ENCODE measurements at regions of chr20 and their contacts with region 1.

Region 1: DNA sequence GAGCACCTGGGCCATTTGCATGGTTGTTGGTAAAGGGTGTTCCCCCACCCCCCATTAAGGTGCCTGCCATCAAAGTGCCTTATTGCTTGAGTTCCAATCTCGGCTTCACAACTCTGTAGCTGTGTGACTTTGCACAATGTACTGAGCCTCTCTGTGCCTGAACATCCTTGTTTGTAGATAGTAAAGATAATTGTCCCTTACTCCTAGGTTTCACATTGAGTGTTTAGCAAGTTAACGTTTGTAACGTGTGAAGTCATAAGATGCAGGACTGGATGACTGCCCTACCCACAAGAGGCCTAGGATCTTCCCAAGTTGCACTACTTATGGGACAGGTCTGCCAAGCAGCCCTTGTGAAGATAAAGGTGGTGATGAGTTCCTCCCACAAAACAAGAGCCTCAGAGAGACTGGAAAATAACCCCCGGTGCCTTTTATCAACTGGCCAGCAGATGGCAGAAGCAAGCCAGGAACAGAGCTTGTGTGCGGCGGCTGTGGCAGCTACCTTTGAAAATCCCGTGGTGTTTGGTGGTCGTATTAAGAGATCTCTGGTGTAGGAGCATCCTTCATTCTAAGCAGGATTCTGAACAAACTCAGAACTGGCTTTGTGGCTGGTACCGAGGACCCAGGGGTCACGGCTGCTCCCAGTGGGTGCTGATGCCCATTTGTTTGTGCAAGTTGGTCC is 99.0 kb downstream of the CDH26 start:
- DNase-seq: peak; percentile 86
- H3K4me3 ChIP-seq: peak overlapping the region in 1 of 8 donors; percentile 66
- H3K27ac ChIP-seq: peak overlapping the region in 6 of 8 donors; percentile 82 to 96 (median 88)
- H3K4me1 ChIP-seq: peaks cover 13 to 78% (median 48%) of the 10 kb centered on the region in 6 donors
- H3K27me3 ChIP-seq: peaks cover 0 to 25% (median 0%) of the 10 kb centered on the region in 7 donors
- CTCF ChIP-seq: peak; percentile 66 to 93 (median 85)
- POLR2A ChIP-seq: no peak

Region 2: DNA sequence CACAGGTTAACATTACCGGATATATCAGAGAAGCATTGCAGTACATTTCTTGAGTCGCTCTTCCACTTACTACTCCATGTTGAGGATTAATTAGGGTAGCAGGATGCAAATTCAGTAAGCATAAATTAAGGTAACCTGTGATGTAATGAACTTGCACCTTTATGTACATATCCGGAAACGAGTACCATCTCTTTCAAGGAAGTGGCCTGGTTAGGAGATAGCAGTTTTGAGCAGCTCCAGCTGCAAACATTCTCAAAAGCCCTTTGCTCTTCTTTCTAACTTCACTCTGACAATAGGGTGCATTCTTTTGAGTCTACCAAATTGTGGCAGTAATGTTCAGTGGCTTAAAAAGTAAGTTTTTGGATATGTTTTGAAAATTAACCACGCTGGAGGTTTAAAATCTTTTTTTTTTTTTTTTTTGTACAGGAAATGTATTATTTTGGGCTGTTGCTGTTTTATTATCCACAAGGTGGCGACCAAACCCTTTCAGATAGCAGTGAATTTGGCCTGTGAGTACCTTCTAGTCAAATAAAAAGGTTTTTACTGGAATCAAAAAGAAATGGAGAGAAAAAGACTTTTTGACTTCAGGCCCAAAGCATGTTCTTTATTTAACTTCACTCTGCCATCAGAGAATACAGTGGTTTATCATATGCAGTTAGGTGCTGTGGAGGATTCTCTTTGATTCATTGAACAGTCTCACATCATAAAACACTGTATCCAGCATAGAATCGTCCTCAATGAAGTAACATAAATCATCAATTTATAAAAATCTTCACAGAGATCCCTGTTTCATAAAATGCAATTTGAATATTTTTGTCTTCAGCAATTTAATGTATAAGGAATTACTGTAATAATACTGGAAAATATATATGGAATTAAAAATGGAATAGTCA is 108.2 kb before region 1 on chr20:
- intact Hi-C with region 1: no loop called
- DNase-seq: no peak
- H3K4me3 ChIP-seq: peak overlapping the region in 1 of 8 donors; percentile 37
- H3K27ac ChIP-seq: peak overlapping the region in 7 of 8 donors; percentile 2 to 80 (median 66)
- H3K4me1 ChIP-seq: peaks cover 6 to 54% (median 25%) of the 10 kb centered on the region in 6 donors
- H3K27me3 ChIP-seq: no peaks in the 10 kb centered on the region
- CTCF ChIP-seq: peak; percentile 18 to 75 (median 66)
- POLR2A ChIP-seq: no peak

Region 3: GRCh38 chr20:60249436-60249835 is 192.2 kb after region 1 on chr20:
- intact Hi-C with region 1: no loop called
- DNase-seq: no peak
- H3K4me3 ChIP-seq: no peak overlapping the region
- H3K27ac ChIP-seq: no peak overlapping the region
- H3K4me1 ChIP-seq: no peaks in the 10 kb centered on the region
- H3K27me3 ChIP-seq: peaks cover 0 to 14% (median 0%) of the 10 kb centered on the region in 7 donors
- CTCF ChIP-seq: no peak
- POLR2A ChIP-seq: no peak

Region 4: GRCh38 chr20:61120595-61121515 is 1063.6 kb after region 1 on chr20:
- intact Hi-C with region 1: loop called (anchors 10 kb)
- DNase-seq: no peak
- H3K4me3 ChIP-seq: no peak overlapping the region
- H3K27ac ChIP-seq: no peak overlapping the region
- H3K4me1 ChIP-seq: peaks cover 0 to 6% (median 2%) of the 10 kb centered on the region in 6 donors
- H3K27me3 ChIP-seq: peaks cover 0 to 21% (median 0%) of the 10 kb centered on the region in 7 donors
- CTCF ChIP-seq: peak in 6 of 11 experiments; percentile 41 to 58 (median 49)
- POLR2A ChIP-seq: no peak